AG04449 (cell line): ENCODE measurements at regions of chr20 and their contacts with region 1.

Region 1: GRCh38 chr20:5580936-5581708 is 169.1 kb upstream of the SHLD1 start:
- DNase-seq: no peak
- H3K4me3 ChIP-seq: no peak overlapping the region
- CTCF ChIP-seq: no peak

Region 2: DNA sequence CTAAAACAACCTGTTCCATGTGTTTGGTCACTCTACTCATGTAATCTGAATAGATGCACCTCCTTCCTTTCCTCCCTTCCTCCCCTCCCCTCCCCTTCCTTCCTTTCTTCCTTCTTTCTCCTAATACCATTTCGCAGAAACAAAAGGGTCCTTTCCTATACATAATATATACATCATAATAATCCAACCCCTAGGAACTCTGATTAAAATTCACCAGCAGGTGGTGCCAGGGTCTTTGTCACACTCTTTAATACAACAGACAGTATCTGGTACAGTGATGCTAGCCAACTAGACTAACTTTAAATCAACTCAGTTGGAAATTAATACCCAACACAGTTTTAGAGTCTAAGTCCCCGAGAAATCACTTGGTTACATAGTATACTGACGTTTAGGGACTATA is 12.1 kb before region 1 on chr20:
- CTCF ChIA-PET with region 1: interaction called, 16 read pairs
- POLR2A ChIA-PET with region 1: no interaction called
- DNase-seq: no peak
- H3K4me3 ChIP-seq: no peak overlapping the region
- CTCF ChIP-seq: peak; percentile 7